ENCODE measurements at regions of chr6 and their contacts with region 1.

Region 1: GRCh38 chr6:11232193-11232769 is at the start of gene NEDD9:
- DNase-seq: peak; percentile 94 to 96
- H3K4me3 ChIP-seq: peak within 1 kb of the TSS; percentile 62
- H3K4me3 Mint-ChIP-seq: peak within 1 kb of the TSS; percentile 78
- H3K27ac Mint-ChIP-seq: peak within 1 kb of the TSS; percentile 85
- H3K4me1 ChIP-seq: peaks cover 32% of the 10 kb centered on the region
- H3K4me1 Mint-ChIP-seq: peaks cover 45% of the 10 kb centered on the region
- H3K27me3 ChIP-seq: no peaks in the 10 kb centered on the region
- H3K27me3 Mint-ChIP-seq: no peaks in the 10 kb centered on the region
- CTCF ChIP-seq: no peak
- total RNA-seq, gene NEDD9: 33.2 and 36.2 TPM in 2 replicates

Region 2: DNA sequence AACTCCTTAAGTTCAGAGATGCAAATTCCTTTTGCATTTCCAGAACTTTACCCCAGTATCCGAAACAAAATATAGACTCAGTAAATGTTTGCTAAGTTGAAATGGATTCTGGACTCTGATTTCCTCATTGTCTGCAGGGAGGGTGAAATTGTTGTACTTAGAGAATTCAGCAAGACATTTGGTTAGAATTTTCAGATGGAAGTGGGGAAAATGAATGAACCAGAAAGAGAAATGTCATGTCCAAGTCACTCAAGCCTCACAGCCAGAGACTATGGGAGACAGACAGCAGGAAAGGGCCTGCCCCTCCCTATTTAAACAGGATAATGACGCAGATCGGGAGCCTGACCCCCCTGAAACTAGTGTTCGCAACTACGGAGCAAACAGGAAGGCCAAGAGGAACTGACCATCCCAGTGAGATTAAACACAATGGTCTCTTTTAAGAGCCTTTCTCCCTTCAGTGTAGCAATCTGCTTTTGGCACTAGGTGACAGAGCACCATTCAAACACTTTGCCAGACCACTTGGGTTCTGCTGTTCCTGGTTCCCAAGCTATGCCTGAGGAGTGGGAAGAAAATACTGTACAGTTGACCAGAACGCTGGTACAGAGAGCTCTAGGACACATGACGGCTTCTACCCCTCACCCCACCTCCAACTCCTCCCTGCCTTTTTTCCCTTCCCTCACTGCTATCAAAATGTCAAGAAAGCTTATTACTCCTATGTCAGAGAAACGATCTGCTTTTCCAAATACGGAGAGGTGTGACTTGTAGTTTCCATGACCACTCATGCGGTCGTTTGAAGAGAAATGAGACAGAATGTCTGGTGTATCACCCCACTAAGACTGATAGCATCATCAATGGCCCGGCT is 13.5 kb before region 1 on chr6:
- CTCF ChIA-PET with region 1: interaction called, 5 read pairs
- POLR2A ChIA-PET with region 1: interaction called, 15 read pairs
- intact Hi-C with region 1: no loop called
- DNase-seq: no peak
- H3K4me3 ChIP-seq: no peak overlapping the region
- H3K4me3 Mint-ChIP-seq: peak overlapping the region; percentile 29
- H3K27ac Mint-ChIP-seq: peak overlapping the region; percentile 69
- H3K4me1 ChIP-seq: peaks cover 32% of the 10 kb centered on the region
- H3K4me1 Mint-ChIP-seq: peaks cover 34% of the 10 kb centered on the region
- H3K27me3 ChIP-seq: no peaks in the 10 kb centered on the region
- H3K27me3 Mint-ChIP-seq: no peaks in the 10 kb centered on the region
- CTCF ChIP-seq: no peak

Region 3: GRCh38 chr6:11298651-11299420 is 66.6 kb after region 1 on chr6:
- CTCF ChIA-PET with region 1: no interaction called
- POLR2A ChIA-PET with region 1: interaction called, 11 read pairs
- intact Hi-C with region 1: loop called (anchors 5 kb)
- DNase-seq: no peak
- H3K4me3 ChIP-seq: no peak overlapping the region
- H3K4me3 Mint-ChIP-seq: no peak overlapping the region
- H3K27ac Mint-ChIP-seq: no peak overlapping the region
- H3K4me1 ChIP-seq: peaks cover 35% of the 10 kb centered on the region
- H3K4me1 Mint-ChIP-seq: peaks cover 33% of the 10 kb centered on the region
- H3K27me3 ChIP-seq: no peaks in the 10 kb centered on the region
- H3K27me3 Mint-ChIP-seq: no peaks in the 10 kb centered on the region
- CTCF ChIP-seq: no peak

Region 4: GRCh38 chr6:11343963-11344747 is 111.9 kb after region 1 on chr6:
- CTCF ChIA-PET with region 1: no interaction called
- POLR2A ChIA-PET with region 1: interaction called, 5 read pairs
- intact Hi-C with region 1: loop called (anchors 2 kb)
- DNase-seq: peak; percentile 85 to 90
- H3K4me3 ChIP-seq: no peak overlapping the region
- H3K4me3 Mint-ChIP-seq: peak overlapping the region; percentile 35
- H3K27ac Mint-ChIP-seq: peak overlapping the region; percentile 92
- H3K4me1 ChIP-seq: peaks cover 42% of the 10 kb centered on the region
- H3K4me1 Mint-ChIP-seq: peaks cover 44% of the 10 kb centered on the region
- H3K27me3 ChIP-seq: no peaks in the 10 kb centered on the region
- H3K27me3 Mint-ChIP-seq: no peaks in the 10 kb centered on the region
- CTCF ChIP-seq: no peak

Region 5: GRCh38 chr6:11434565-11435326 is 202.5 kb after region 1 on chr6:
- CTCF ChIA-PET with region 1: no interaction called
- POLR2A ChIA-PET with region 1: interaction called, 13 read pairs
- intact Hi-C with region 1: loop called (anchors 5 kb)
- DNase-seq: peak; percentile 81 to 84
- H3K4me3 ChIP-seq: no peak overlapping the region; the same call in 1 of the 2 replicates
- H3K4me3 Mint-ChIP-seq: peak overlapping the region; percentile 28
- H3K27ac Mint-ChIP-seq: peak overlapping the region; percentile 58
- H3K4me1 ChIP-seq: peaks cover 50% of the 10 kb centered on the region
- H3K4me1 Mint-ChIP-seq: peaks cover 57% of the 10 kb centered on the region
- H3K27me3 ChIP-seq: no peaks in the 10 kb centered on the region
- H3K27me3 Mint-ChIP-seq: no peaks in the 10 kb centered on the region
- CTCF ChIP-seq: no peak

Measured in Caco-2 (cell line).